Psoas muscle (tissue), 8 donors: ENCODE measurements at regions of chr20 and their contacts with region 1.

Region 1: DNA sequence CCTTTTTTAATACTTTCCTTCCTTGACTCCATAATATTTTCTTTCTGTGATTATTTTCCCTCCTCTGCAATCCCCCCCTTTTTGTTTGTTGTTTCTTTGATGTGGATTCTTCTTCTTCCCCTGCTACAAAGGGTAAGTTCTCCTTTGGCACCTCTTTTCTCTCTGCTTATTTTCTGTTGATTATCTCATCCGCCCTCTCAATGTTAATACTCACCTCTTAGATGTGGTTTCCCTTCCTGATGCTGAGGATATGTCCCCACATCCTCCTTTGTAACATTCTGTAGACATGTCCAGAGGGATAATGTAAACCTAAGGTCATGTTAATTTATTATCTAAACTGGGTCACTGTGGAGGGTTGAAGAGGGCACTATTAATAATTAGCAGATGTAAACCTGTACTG is 17.7 kb downstream of the FLRT3 start:
- DNase-seq: no peak
- ATAC-seq: no peak
- H3K4me3 ChIP-seq: no peak overlapping the region
- H3K27ac ChIP-seq: no peak overlapping the region
- H3K4me1 ChIP-seq: no peaks in the 10 kb centered on the region
- H3K27me3 ChIP-seq: peaks cover 0 to 2% (median 0%) of the 10 kb centered on the region in 3 donors
- CTCF ChIP-seq: no peak

Region 2: GRCh38 chr20:14536738-14537137 is 217.0 kb after region 1 on chr20:
- intact Hi-C with region 1: no loop called
- DNase-seq: no peak
- ATAC-seq: no peak
- H3K4me3 ChIP-seq: no peak overlapping the region
- H3K27ac ChIP-seq: no peak overlapping the region
- H3K4me1 ChIP-seq: no peaks in the 10 kb centered on the region
- H3K27me3 ChIP-seq: no peaks in the 10 kb centered on the region
- CTCF ChIP-seq: no peak

Region 3: GRCh38 chr20:15475483-15475882 is 1155.8 kb after region 1 on chr20:
- intact Hi-C with region 1: loop called in 1 of 2 experiments (anchors 5 kb)
- DNase-seq: peak in 1 of 2 donors; percentile 49
- ATAC-seq: no peak
- H3K4me3 ChIP-seq: no peak overlapping the region
- H3K27ac ChIP-seq: no peak overlapping the region
- H3K4me1 ChIP-seq: no peaks in the 10 kb centered on the region
- H3K27me3 ChIP-seq: no peaks in the 10 kb centered on the region
- CTCF ChIP-seq: no peak